Activated CD4-positive, alpha-beta memory T cell treated with anti-CD3 and anti-CD28 coated beads for 36 hours (primary cell): ENCODE measurements at regions of chr6 and their contacts with region 1.

Region 1: GRCh38 chr6:68108233-68108835 is 526.7 kb upstream of the ADGRB3 start:
- DNase-seq: no peak
- H3K4me3 Mint-ChIP-seq: no peak overlapping the region
- H3K27ac Mint-ChIP-seq: no peak overlapping the region
- H3K4me1 Mint-ChIP-seq: no peaks in the 10 kb centered on the region
- H3K27me3 Mint-ChIP-seq: no peaks in the 10 kb centered on the region

Region 2: GRCh38 chr6:66948106-66948505 is 1160.2 kb before region 1 on chr6:
- CTCF ChIA-PET with region 1: no interaction called
- POLR2A ChIA-PET with region 1: no interaction called
- intact Hi-C with region 1: loop called (anchors 10 kb)
- DNase-seq: no peak
- H3K4me3 Mint-ChIP-seq: no peak overlapping the region
- H3K27ac Mint-ChIP-seq: no peak overlapping the region
- H3K4me1 Mint-ChIP-seq: no peaks in the 10 kb centered on the region
- H3K27me3 Mint-ChIP-seq: no peaks in the 10 kb centered on the region

Region 3: DNA sequence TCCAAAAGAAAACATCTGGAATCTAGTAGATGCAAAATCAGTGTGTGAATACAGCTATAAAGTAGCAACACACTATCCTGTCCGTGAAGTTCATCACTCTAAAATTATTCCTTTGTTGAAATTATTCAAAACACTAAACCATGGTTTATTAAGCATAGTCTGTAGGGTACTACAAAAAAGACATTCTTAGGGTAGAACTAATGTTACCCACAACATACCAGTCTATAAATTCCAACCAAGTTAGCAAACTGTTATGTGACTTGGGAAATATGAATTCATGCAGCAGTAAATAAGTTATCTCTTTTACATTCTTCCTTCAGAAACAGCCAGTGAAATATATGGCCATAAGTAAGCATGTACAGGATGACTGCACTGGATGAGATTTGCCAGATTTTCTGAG is 53.6 kb before region 1 on chr6:
- CTCF ChIA-PET with region 1: no interaction called
- POLR2A ChIA-PET with region 1: no interaction called
- intact Hi-C with region 1: no loop called
- DNase-seq: no peak
- H3K4me3 Mint-ChIP-seq: no peak overlapping the region
- H3K27ac Mint-ChIP-seq: no peak overlapping the region
- H3K4me1 Mint-ChIP-seq: no peaks in the 10 kb centered on the region
- H3K27me3 Mint-ChIP-seq: no peaks in the 10 kb centered on the region

Region 4: GRCh38 chr6:68144667-68145066 is 36.3 kb after region 1 on chr6:
- CTCF ChIA-PET with region 1: no interaction called
- POLR2A ChIA-PET with region 1: no interaction called
- intact Hi-C with region 1: no loop called
- DNase-seq: no peak
- H3K4me3 Mint-ChIP-seq: no peak overlapping the region
- H3K27ac Mint-ChIP-seq: no peak overlapping the region
- H3K4me1 Mint-ChIP-seq: no peaks in the 10 kb centered on the region
- H3K27me3 Mint-ChIP-seq: no peaks in the 10 kb centered on the region